HEK293T (cell line): ENCODE measurements at regions of chr19 and their contacts with region 1.

Region 1: GRCh38 chr19:53980553-53981375 is 10.7 kb upstream of the CACNG6 start:
- DNase-seq: peak; percentile 67

Region 2: DNA sequence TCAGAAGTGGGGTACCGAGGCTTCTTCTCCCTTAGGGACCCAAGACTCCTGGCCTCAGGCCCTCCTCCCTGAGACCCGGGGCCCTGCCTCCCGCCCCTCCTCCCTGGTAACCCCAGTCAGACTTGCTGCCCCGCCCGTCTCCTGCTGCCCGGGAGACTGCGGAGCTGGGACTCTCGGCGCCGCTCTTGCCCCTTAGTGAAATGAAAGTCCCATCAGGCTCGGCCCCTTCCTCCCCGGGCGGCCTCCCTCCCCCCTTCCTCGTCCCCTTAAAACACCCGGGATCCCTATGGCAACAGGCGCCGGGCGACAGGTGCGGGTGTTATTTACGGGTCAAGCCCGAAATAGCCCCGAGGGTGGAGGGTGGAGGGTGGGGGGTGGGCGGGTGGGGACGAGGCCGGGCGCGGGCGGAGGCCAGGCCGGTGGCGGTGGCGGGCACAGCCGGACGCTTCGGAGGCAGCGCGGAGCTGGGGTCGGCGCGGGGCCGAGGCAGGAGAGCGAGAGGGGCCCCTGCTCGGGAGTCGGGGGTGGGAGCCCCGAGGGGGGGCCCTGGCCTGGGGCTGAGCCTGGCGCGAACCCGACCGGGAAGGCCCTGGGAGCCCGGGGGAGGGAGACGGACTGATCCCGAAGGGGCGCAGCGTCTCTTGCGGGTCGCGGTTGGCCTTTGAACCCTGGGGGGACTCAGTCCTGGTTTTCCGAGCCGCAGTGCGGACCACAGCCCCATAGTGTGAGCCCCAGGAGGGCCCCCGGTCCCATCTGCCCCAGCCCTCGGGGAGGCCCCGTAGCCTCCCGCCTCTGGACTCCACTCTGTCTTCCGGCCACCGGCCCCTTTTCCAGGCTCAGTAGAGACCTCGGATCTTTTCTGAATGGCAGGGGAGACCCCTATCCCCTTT is 10.7 kb after region 1 on chr19 and contains the start of gene CACNG6:
- CTCF ChIA-PET with region 1: no interaction called
- POLR2A ChIA-PET with region 1: interaction called, 18 read pairs
- DNase-seq: peak; percentile 49

Region 3: DNA sequence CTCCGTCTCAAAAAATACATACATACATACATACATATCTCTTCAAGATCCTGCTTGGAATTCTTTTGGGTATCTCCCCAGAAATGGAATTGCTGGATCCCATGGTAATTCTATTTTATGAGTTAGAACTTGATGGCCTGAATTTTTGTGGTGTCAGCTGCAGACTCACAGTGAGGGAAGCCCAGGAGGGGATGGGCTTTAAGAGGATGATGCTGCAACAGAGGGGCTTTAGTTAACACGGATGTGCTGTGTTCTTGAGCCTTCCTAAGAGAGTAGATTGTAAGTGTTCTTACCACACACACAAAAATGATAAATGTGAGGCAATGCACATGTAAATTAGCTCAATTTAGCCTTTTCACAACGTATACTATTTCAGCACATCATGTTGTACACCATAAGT is 42.4 kb after region 1 on chr19:
- CTCF ChIA-PET with region 1: interaction called, 8 read pairs
- POLR2A ChIA-PET with region 1: interaction called, 21 read pairs
- DNase-seq: no peak